ENCODE measurements at regions of chr9 and their contacts with region 1.

Region 1: GRCh38 chr9:121604242-121604641 is 47.2 kb upstream of the DAB2IP start:
- DNase-seq: no peak
- ATAC-seq: peak; percentile 28

Region 2: GRCh38 chr9:121009650-121010049 is 594.6 kb before region 1 on chr9:
- intact Hi-C with region 1: loop called (anchors 5 kb)
- DNase-seq: no peak
- ATAC-seq: no peak